ENCODE measurements at regions of chrX and their contacts with region 1.

Region 1: GRCh38 chrX:18984381-18985185 is 669 bp upstream of the PHKA2 start:
- DNase-seq: peak; percentile 72 to 90 (median 85)
- ATAC-seq: peak; percentile 95
- H3K4me3 ChIP-seq: peak overlapping the region; percentile 59
- H3K4me3 Mint-ChIP-seq: peak overlapping the region; percentile 77 to 92 (median 86)
- H3K27ac ChIP-seq: peak overlapping the region; percentile 96
- H3K27ac Mint-ChIP-seq: peak overlapping the region; percentile 86 to 98 (median 95)
- H3K4me1 ChIP-seq: peaks cover 3 to 17% of the 10 kb centered on the region in 2 donors
- H3K4me1 Mint-ChIP-seq: peaks cover 5 to 25% (median 10%) of the 10 kb centered on the region in 7 donors
- H3K27me3 ChIP-seq: no peaks in the 10 kb centered on the region
- H3K27me3 Mint-ChIP-seq: no peaks in the 10 kb centered on the region

Region 2: GRCh38 chrX:18674788-18675735 is 309.5 kb before region 1 on chrX:
- CTCF ChIA-PET with region 1: no interaction called
- POLR2A ChIA-PET with region 1: no interaction called
- intact Hi-C with region 1: loop called in 1 of 2 experiments (anchors 1 kb)
- DNase-seq: peak; percentile 76 to 89 (median 87)
- ATAC-seq: peak; percentile 96
- H3K4me3 ChIP-seq: peak overlapping the region; percentile 63
- H3K4me3 Mint-ChIP-seq: peak overlapping the region; percentile 74 to 87 (median 80)
- H3K27ac ChIP-seq: peak overlapping the region; percentile 82
- H3K27ac Mint-ChIP-seq: peak overlapping the region; percentile 71 to 95 (median 85)
- H3K4me1 ChIP-seq: no peaks in the 10 kb centered on the region
- H3K4me1 Mint-ChIP-seq: peaks cover 0 to 15% (median 8%) of the 10 kb centered on the region in 7 donors
- H3K27me3 ChIP-seq: no peaks in the 10 kb centered on the region
- H3K27me3 Mint-ChIP-seq: no peaks in the 10 kb centered on the region

Region 3: DNA sequence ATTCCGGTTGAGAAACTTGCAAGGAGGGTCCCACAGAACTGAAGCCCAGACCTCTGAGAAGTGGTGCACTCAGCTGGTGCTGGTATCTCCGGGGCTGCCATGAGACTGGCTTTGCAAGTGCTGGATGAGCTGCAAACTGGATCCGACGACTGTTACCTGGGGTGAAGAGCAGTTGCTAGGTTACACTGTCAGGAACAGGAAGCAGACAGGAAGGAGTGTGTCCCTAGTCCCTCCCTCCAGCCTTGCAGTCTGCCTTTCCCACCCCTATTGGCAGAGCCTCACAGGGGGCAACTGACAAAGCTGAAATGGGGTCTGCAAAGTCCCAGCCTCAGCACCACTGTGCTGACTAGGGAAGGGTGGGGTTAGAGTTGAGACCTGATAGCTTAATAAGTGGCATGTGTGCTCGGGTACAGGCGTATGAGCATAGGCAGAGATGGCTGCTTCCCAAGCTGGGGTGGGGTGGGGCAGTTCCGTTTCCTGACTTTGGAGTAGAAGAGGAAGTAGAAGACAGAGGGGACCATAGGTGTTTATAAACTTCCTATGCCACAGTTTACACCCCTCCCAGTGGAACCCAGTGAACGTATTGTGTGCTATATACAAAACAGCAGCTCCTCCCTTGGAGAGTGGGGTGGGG is 259.2 kb before region 1 on chrX:
- CTCF ChIA-PET with region 1: no interaction called
- POLR2A ChIA-PET with region 1: no interaction called
- intact Hi-C with region 1: no loop called
- DNase-seq: peak in 2 of 9 donors; percentile 1 to 11
- ATAC-seq: no peak
- H3K4me3 ChIP-seq: no peak overlapping the region
- H3K4me3 Mint-ChIP-seq: peak overlapping the region; percentile 17 to 67 (median 46)
- H3K27ac ChIP-seq: no peak overlapping the region
- H3K27ac Mint-ChIP-seq: peak overlapping the region in 6 of 9 donors; percentile 5 to 76 (median 58)
- H3K4me1 ChIP-seq: peaks cover 0 to 9% of the 10 kb centered on the region in 2 donors
- H3K4me1 Mint-ChIP-seq: peaks cover 0 to 17% (median 10%) of the 10 kb centered on the region in 7 donors
- H3K27me3 ChIP-seq: no peaks in the 10 kb centered on the region
- H3K27me3 Mint-ChIP-seq: no peaks in the 10 kb centered on the region

Region 4: GRCh38 chrX:18833071-18833731 is 151.4 kb before region 1 on chrX:
- CTCF ChIA-PET with region 1: no interaction called
- POLR2A ChIA-PET with region 1: no interaction called
- intact Hi-C with region 1: no loop called
- DNase-seq: no peak
- ATAC-seq: no peak
- H3K4me3 ChIP-seq: no peak overlapping the region
- H3K4me3 Mint-ChIP-seq: no peak overlapping the region
- H3K27ac ChIP-seq: no peak overlapping the region
- H3K27ac Mint-ChIP-seq: no peak overlapping the region
- H3K4me1 ChIP-seq: no peaks in the 10 kb centered on the region
- H3K4me1 Mint-ChIP-seq: no peaks in the 10 kb centered on the region
- H3K27me3 ChIP-seq: no peaks in the 10 kb centered on the region
- H3K27me3 Mint-ChIP-seq: no peaks in the 10 kb centered on the region

Region 5: GRCh38 chrX:18955676-18956075 is 28.9 kb before region 1 on chrX:
- CTCF ChIA-PET with region 1: no interaction called
- POLR2A ChIA-PET with region 1: no interaction called
- intact Hi-C with region 1: loop called in 1 of 2 experiments (anchors 2 kb)
- DNase-seq: no peak
- ATAC-seq: no peak
- H3K4me3 ChIP-seq: no peak overlapping the region
- H3K4me3 Mint-ChIP-seq: no peak overlapping the region
- H3K27ac ChIP-seq: no peak overlapping the region
- H3K27ac Mint-ChIP-seq: no peak overlapping the region
- H3K4me1 ChIP-seq: no peaks in the 10 kb centered on the region
- H3K4me1 Mint-ChIP-seq: peaks cover 9 to 29% (median 19%) of the 10 kb centered on the region in 7 donors
- H3K27me3 ChIP-seq: no peaks in the 10 kb centered on the region
- H3K27me3 Mint-ChIP-seq: no peaks in the 10 kb centered on the region

Region 6: DNA sequence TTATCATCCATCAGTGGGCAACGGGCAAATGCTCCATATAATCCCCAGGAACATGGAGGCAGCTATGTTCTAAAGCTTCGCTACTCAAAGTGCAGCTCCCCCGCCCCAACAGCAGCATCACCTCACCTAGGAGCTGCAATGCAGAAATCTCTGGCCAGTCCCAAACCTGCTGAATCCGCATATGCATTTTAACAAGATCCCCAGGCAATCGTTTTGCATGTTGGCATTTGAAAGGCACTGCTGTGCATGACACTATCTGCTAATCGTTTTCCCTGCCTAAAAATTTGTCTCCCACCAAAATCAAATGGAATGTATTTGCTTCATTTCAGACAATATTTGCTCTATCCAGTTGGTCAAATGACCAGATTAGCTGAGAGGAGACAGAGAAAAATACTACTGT is 122.5 kb after region 1 on chrX:
- CTCF ChIA-PET with region 1: no interaction called
- POLR2A ChIA-PET with region 1: no interaction called
- intact Hi-C with region 1: no loop called
- DNase-seq: no peak
- ATAC-seq: no peak
- H3K4me3 ChIP-seq: no peak overlapping the region
- H3K4me3 Mint-ChIP-seq: no peak overlapping the region
- H3K27ac ChIP-seq: no peak overlapping the region
- H3K27ac Mint-ChIP-seq: no peak overlapping the region
- H3K4me1 ChIP-seq: no peaks in the 10 kb centered on the region
- H3K4me1 Mint-ChIP-seq: no peaks in the 10 kb centered on the region
- H3K27me3 ChIP-seq: no peaks in the 10 kb centered on the region
- H3K27me3 Mint-ChIP-seq: peaks cover 9 to 48% (median 31%) of the 10 kb centered on the region in 5 donors

Region 7: DNA sequence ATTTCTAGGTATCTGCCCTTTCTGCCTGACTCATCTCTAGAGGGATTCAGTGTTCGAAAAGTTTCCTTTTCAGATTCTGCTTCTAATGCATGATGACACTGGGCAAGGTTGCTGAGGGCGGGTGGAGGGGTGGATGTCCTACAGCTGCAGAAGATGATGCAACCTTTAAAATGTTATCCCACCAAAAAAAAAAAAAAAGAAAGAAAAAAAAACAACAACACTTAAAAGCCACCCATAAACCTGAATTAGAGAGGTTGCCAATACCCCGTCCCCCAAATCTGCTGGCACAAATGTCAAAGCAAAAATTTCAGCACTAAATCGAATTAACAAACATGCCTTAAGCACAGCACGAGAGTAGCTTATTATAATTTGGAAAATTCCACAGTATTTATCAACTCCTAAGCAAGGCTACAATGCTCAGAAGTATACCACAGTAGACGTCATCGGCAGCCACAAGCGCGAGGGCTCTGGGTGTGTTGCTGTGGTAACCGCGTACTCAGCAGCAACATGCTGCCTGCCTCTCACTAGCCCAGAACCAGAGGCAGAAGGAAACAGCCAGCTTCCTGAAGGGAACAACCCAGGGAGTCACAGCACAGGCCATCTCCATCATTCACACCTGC is 698.2 kb after region 1 on chrX:
- CTCF ChIA-PET with region 1: no interaction called
- POLR2A ChIA-PET with region 1: no interaction called
- intact Hi-C with region 1: no loop called
- DNase-seq: peak; percentile 24 to 88 (median 81)
- ATAC-seq: peak; percentile 97
- H3K4me3 ChIP-seq: no peak overlapping the region
- H3K4me3 Mint-ChIP-seq: peak overlapping the region in 9 of 10 donors; percentile 4 to 85 (median 67)
- H3K27ac ChIP-seq: peak overlapping the region; percentile 81
- H3K27ac Mint-ChIP-seq: peak overlapping the region; percentile 85 to 100 (median 98)
- H3K4me1 ChIP-seq: peaks cover 30 to 37% of the 10 kb centered on the region in 2 donors
- H3K4me1 Mint-ChIP-seq: peaks cover 43 to 88% (median 82%) of the 10 kb centered on the region in 7 donors
- H3K27me3 ChIP-seq: no peaks in the 10 kb centered on the region
- H3K27me3 Mint-ChIP-seq: no peaks in the 10 kb centered on the region

Region 8: GRCh38 chrX:19990556-19991349 is 1006.2 kb after region 1 on chrX and contains the start of gene BCLAF3:
- CTCF ChIA-PET with region 1: no interaction called
- POLR2A ChIA-PET with region 1: no interaction called
- intact Hi-C with region 1: loop called (anchors 2 kb)
- DNase-seq: peak; percentile 64 to 91 (median 71)
- ATAC-seq: peak; percentile 94
- H3K4me3 ChIP-seq: peak within 1 kb of the TSS; percentile 51
- H3K4me3 Mint-ChIP-seq: peak within 1 kb of the TSS; percentile 82 to 96 (median 90)
- H3K27ac ChIP-seq: peak within 1 kb of the TSS; percentile 71
- H3K27ac Mint-ChIP-seq: peak within 1 kb of the TSS; percentile 79 to 98 (median 92)
- H3K4me1 ChIP-seq: no peaks in the 10 kb centered on the region
- H3K4me1 Mint-ChIP-seq: peaks cover 7 to 30% (median 19%) of the 10 kb centered on the region in 7 donors
- H3K27me3 ChIP-seq: no peaks in the 10 kb centered on the region
- H3K27me3 Mint-ChIP-seq: no peaks in the 10 kb centered on the region
- total RNA-seq, gene BCLAF3: 6.2 to 14.1 (median 11.7) TPM